ENCODE measurements at regions of chr6 and their contacts with region 1.

Region 1: GRCh38 chr6:161139766-161140553 is 133.9 kb downstream of the AGPAT4 start:
- DNase-seq: no peak

Region 2: DNA sequence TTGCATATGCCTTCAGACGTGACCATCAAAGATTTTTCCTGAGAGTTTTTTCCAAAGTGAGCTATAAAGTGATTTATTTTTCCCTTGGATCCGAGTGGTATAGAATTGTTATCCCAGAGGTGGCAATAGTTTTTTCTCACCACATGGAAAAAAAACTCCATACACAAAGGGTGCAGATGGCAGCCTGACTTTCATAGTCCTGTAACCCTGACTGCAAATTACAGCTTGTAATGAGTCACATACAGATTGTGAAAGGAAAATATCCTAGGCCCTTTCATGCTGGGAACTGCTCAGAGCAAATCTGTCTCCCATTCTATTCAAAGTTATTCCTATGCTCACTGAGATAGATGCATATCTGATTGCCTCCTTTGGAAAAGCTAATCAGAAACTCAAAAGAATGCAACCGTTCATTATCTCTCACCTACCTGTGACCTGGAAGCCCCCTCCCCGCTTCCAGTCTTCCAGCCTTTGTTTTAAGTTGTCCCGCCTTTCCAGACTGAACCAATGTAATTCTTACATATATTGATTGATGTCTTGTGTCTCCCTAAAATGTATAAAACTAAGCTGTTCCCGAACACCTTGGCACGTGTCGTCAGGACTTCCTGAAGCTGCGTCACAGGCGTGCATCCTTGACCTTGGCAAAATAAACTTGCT is 257.1 kb before region 1 on chr6:
- intact Hi-C with region 1: no loop called
- DNase-seq: no peak

Region 3: GRCh38 chr6:161163466-161164181 is 23.7 kb after region 1 on chr6:
- intact Hi-C with region 1: loop called in 1 of 2 experiments (anchors 1 kb)
- DNase-seq: peak; percentile 48

Region 4: DNA sequence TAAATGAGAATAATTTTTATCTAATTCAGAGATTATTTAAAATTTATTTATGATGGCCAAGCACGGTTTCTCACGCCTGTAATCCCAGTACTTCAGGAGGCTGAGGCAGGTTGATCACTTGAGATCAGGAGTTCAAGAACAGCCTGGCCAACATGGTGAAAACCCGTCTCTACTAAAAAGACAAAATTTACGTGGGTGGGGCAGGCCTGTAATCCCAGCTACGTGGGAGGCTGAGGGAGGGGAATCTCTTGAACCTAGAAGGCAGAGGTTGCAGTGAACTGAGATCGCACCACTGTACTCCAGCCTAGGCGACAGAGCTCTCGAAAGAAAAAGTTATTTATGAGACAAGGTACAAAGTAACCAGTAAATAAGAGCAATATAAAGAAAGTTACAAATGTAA is 193.4 kb after region 1 on chr6:
- intact Hi-C with region 1: loop called in 1 of 2 experiments (anchors 5 kb)
- DNase-seq: no peak

Region 5: DNA sequence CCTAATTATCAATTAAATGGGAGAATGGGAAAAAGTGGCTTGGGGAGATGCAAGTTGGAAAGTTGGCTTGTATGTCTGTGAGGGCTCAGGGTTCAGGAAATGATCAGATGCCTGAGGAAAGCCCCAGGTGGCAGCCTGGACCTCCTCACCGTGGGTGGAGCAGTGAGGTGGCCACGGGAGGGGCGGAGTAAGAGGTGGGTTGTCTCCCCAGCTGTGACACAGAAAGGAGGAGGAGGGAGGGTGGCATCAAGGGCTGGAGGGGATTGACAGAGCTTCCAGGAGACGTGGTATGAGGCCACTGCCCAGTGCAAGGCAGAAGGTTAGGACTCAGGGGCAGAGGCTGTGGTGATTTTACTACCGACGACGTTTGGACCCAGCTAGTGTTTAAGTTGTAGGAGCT is 915.4 kb after region 1 on chr6:
- intact Hi-C with region 1: no loop called
- DNase-seq: no peak

Measured in posterior vena cava (tissue), 2 donors.